HEK293 (cell line): ENCODE measurements at regions of chr10 and their contacts with region 1.

Region 1: GRCh38 chr10:117537436-117537903 is 5.1 kb upstream of the EMX2 start:
- H3K4me3 ChIP-seq: peak overlapping the region; percentile 14; the same call in 1 of the 2 replicates
- H3K27ac ChIP-seq: no peak overlapping the region
- H3K4me1 ChIP-seq: peaks cover 5% of the 10 kb centered on the region
- CTCF ChIP-seq: no peak

Region 2: DNA sequence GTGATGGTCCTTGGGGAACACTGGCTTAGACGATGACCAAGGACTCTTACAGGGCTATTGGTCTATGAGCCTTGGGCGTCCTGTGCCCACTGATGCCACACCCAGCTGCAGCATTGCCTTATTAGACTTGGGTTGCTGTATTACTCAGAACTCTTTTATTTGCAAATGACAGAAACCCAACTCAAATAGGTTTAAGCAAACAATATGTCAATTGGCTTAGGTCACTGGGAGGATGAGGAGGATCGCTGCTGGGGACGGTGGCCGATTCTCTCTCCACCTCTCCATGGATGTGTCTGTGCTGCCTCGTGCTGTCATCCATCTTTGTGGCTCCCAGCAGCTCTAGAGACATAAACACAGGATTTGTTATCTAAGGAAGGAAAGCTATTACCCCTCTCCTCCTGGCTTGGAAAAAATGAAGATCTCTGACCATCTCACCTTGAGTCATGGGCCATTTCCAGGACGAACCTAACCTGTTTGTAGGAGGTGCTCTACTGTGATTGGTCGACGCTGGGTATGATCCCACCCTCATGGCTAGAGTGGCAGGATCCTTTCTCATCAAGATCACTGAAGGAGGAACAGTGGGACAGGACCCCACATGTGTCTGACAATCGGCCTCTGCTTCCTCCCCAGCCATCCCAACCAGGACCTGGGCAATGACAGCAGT is 149.0 kb after region 1 on chr10:
- CTCF ChIA-PET with region 1: interaction called, 13 read pairs
- POLR2A ChIA-PET with region 1: no interaction called
- H3K4me3 ChIP-seq: no peak overlapping the region
- H3K27ac ChIP-seq: no peak overlapping the region
- H3K4me1 ChIP-seq: no peaks in the 10 kb centered on the region
- CTCF ChIP-seq: no peak

Region 3: DNA sequence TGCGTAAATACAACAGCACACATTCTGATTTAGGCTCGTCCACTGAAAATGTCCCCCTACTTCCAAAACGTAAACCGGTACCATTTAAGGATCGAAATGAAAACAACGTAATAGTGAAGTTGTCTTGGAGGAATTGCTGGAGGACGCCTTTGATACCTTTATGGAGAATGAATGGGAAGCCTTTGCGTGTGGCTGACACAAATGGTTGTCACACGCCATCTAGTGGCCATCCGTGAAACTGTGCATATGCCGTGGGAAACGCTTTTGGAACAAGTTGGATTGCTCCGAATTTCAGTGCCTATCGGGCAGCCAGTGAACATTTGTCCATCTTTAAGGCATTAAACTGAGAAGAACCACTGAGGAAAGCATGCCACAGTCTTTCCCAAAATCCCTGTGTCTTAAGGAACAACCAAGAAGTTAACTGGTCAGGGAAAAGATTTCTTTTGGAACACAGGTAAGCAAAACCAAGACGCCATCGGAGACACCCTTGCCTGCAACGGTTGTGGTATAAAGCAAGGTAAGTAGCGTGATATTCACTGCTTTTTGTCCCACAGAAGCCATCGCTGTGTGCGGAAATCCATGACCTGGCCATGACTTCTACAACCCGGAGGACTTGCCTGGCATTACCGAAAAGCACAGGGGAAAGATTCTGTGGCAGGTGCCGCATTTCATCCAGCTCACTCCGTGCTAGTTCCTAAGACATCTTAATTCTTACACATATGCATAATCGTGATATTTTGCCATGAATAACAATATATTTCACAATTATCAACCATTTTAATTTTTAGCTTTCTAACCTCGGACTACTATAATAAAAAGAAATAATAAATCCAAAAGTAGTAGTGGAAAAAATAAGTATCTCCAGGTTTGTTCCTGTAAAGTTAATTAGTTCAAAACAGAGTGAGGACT is 704.0 kb after region 1 on chr10:
- CTCF ChIA-PET with region 1: interaction called, 28 read pairs
- POLR2A ChIA-PET with region 1: no interaction called
- H3K4me3 ChIP-seq: peak overlapping the region; percentile 22
- H3K27ac ChIP-seq: no peak overlapping the region
- H3K4me1 ChIP-seq: no peaks in the 10 kb centered on the region
- CTCF ChIP-seq: peak; percentile 85